ENCODE measurements at regions of chr2 and their contacts with region 1.

Region 1: DNA sequence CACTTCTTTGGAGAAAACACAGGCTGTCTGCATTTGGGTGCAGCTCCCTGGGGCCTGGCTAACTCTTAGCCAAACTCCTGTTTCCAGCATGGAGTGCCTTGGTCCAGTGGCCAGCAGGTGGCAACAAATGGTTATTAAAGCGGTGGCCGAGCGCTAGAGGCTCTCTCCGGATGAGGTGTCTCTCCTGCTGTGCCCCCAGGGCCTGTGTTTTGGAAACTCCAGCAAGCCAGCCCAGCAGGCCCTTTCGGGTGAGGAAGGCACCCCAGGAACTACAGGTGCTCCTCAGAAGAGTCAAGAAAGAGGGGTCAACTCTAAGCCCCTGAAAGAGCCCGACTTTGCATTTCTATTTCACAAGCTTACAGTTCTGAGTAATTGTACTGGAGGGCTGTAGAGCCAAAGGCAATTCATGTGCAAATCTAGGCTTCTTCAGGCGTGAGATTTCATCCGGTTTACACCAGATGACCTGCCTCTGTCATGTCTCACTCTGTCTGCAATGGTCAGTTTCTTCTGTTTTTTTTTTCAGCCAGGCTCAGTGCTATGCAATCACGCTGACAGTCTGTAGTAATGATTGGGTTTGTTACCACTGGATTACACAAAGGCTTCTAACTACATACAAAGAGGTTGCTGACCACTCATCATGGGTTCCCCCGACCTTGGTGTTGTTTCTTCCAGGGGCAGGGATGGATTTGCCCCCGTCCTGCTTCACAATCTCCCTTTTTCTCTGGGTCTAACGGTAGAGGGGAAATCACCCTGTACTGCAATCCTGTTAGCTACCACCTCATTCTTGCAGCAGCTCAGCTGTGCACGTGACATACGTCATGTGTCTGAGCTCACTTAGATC is 7.6 kb upstream of the CHRNA1 start:
- DNase-seq: peak; percentile 69
- CTCF ChIP-seq: peak; percentile 84

Region 2: DNA sequence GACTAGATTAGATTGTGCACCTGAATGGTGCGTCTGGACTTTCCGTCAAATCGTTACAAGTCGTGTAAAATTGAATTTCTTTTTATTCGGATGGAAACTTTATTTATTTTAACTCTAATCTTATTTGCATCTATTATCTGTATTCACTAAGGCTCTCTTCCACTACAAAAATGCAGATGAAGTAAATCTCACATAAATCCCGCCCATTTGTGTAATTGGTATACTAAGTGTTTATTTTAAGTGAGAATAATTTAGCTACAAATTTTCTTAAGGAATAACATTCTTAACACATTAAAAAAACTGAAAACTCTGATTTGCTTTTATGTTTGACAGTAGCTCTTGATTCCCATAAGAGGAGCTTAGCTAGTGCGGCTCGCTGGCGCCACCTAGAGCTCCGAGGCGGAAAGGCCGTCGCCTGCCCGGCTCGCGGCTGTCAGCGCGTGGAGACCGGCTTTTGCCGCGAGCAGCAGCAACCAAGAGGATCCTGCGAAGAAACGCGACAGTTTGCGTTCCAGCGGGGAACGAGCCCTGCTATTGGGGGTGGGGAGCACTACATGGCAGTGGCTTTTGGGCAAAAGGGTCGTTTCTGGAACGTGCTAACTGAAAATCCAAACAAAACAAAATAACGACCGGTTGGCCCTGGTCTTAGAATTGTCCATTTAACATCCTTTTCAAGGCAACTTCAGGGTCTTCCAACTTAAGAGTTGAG is 430.4 kb before region 1 on chr2:
- CTCF ChIA-PET with region 1: no interaction called
- POLR2A ChIA-PET with region 1: no interaction called
- DNase-seq: peak; percentile 84
- CTCF ChIP-seq: peak; percentile 98

Region 3: DNA sequence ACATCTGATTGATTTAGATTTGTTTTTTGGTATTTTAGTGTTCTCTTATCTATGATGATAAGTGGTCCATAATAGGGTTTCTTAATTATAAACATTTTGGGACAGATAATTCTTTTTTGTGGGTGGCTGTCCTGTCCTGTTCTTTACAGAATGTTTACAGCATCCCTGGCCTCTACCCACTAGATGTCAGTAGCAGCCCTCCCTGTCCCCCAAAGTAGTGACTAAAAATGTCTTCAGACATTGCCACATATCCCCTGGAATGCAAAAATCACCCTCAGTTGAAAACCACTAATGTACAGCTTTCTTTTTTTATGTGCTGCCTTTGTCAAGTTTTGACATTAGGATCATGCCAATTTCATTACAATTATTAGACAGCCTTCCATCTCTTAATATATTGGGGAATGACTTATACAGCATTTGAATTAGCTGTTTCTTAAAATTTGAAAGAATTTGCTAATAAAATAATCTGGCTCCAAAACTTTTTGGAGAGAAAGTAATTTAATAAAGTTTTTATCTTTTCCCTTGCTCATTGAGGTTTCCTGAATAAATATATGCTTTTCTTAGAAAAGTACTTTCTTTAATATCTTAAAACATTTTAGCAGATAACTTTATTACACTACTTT is 193.8 kb before region 1 on chr2:
- CTCF ChIA-PET with region 1: no interaction called
- POLR2A ChIA-PET with region 1: no interaction called
- DNase-seq: no peak
- CTCF ChIP-seq: peak; percentile 49

Region 4: GRCh38 chr2:174786066-174786725 is 14.3 kb after region 1 on chr2:
- CTCF ChIA-PET with region 1: interaction called, 10 read pairs
- POLR2A ChIA-PET with region 1: no interaction called
- DNase-seq: no peak
- CTCF ChIP-seq: no peak

Region 5: DNA sequence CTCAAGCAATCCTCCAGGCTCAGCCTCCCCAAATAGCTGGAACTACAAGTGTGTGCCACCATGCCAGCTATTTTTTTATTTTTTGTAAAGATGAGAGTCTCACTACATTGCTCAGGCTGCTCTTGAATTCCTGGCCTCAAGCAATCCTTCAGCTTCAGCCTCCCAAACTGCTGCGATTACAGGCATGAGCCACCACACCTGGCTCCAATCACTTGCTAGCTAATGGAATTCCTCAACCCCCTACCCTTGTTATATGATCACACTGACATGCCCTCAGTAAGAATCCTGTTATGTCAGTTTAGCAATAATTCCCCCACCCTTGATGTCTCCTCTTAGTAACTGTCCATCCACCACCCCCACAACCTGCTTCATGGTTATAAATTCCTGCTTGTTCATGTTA is 221.0 kb after region 1 on chr2:
- CTCF ChIA-PET with region 1: interaction called, 25 read pairs
- POLR2A ChIA-PET with region 1: no interaction called
- DNase-seq: no peak
- CTCF ChIP-seq: no peak

Region 6: DNA sequence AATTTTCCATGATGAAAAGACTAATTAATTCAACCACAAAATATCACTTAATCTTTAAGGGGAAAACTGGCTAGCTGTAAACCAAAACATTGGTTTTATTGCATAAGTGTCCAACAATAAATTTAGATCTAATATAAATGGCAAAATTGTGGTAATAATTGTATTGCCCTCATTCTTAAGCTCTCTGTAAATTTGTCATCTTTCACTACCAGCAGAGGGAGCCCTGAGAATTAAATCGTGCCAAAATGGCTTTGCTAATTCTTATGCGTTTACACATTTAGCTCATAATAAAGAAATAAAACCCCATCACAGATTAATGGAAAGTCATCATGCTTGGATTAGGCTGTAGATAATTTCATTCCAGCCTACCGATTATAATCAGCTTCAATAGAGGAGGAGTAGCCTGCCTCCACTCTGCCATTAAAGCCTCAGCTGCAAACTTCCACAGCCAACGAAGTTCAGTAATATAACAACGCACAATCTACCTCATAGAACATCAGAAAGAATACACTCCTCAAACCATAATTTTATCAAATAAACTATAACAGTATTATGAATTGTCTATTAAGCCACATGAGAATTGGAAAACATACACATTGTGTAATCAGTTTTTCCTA is 479.7 kb after region 1 on chr2:
- CTCF ChIA-PET with region 1: no interaction called
- POLR2A ChIA-PET with region 1: no interaction called
- DNase-seq: peak; percentile 28
- CTCF ChIP-seq: peak; percentile 60

Region 7: DNA sequence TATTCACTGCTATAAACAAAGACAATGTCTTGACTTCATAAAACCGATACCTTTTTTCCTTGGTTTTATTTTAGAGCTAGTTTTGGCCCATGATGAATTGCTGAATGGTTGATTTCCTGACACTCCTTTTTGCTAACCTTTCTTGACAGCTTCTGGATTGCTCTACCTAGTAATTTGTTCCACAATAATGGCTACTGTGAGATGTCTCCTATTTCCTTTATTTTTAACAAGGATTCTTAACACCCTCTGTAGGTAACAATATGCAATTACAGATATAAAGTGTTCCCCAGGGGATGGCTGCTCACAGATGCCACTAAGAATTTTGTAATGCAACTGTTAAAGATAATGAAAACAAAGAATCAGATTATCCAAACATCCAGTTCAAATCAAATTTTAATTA is 510.4 kb after region 1 on chr2:
- CTCF ChIA-PET with region 1: interaction called, 10 read pairs
- POLR2A ChIA-PET with region 1: no interaction called
- DNase-seq: peak; percentile 34
- CTCF ChIP-seq: peak; percentile 17